Endothelial cell of umbilical vein (primary cell): ENCODE measurements at regions of chr4 and their contacts with region 1.

Region 1: DNA sequence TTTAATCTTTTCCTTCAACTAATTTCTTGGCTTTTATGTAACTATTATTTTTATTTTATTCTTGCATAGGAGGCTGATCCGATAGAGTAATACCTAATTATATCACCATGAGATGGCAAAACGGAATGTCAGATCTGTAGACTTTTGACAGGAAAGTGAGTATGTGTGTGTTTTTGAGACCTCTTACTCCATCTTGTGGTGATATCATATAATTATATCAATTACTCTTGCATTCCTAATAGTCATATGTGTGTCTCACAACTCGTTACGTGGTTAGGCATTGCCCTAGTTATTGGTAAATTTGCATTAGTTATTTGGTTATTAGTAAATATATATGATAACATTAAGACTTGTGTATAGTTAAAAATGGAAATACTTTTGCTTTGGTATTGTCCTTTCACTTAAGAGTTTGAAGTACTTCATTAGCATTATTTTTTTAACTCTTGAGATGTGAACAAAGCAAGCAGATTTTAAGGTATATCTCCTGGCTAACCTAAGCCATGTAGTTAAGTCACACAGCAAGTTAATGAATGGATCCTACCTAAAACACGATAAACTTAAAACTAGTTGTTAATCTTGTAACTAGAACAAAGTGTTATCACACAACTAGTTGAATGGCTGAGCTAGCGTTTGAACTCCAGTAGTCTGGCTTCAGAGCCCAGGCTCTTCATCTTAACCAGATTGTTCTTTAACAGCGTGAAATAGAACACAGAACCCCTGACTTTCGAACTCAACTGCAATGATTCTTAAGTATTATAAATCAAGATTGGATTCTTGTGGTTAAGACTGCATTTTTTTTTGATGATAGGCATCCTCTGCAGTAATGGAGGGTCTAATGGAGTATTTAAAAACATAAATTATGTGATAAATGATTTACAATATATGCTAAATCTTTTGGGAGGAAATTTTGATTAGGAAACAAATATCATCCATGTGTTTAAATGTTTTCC is 67.1 kb downstream of the PGRMC2 start:
- DNase-seq: peak; percentile 70
- H3K4me3 ChIP-seq: no peak overlapping the region
- H3K27ac ChIP-seq: peak overlapping the region; percentile 28
- H3K4me1 ChIP-seq: no peaks in the 10 kb centered on the region
- H3K27me3 ChIP-seq: no peaks in the 10 kb centered on the region
- CTCF ChIP-seq: peak; percentile 16 to 20
- POLR2A ChIP-seq: no peak

Region 2: GRCh38 chr4:127965062-127965802 is 255.3 kb before region 1 on chr4 and contains the starts of genes ABHD18 and MFSD8:
- CTCF ChIA-PET with region 1: interaction called, 4 read pairs
- POLR2A ChIA-PET with region 1: no interaction called
- dilution Hi-C with region 1: no loop called
- intact Hi-C with region 1: loop called (anchors 10 kb)
- DNase-seq: peak; percentile 99
- H3K4me3 ChIP-seq: peak within 1 kb of the TSS; percentile 70 to 85 (median 71)
- H3K27ac ChIP-seq: peak within 1 kb of the TSS; percentile 62
- H3K4me1 ChIP-seq: peaks cover 8% of the 10 kb centered on the region
- H3K27me3 ChIP-seq: no peaks in the 10 kb centered on the region
- CTCF ChIP-seq: peak; percentile 32 to 61
- POLR2A ChIP-seq: peak; percentile 76
- total RNA-seq, gene ABHD18: 9.1 and 10.1 TPM in 2 replicates
- total RNA-seq, gene MFSD8: 19.4 and 21.3 TPM in 2 replicates

Region 3: GRCh38 chr4:128068935-128069334 is 151.6 kb before region 1 on chr4:
- CTCF ChIA-PET with region 1: interaction called, 66 read pairs
- POLR2A ChIA-PET with region 1: no interaction called
- dilution Hi-C with region 1: no loop called
- intact Hi-C with region 1: loop called (anchors 2 kb)
- DNase-seq: peak; percentile 40
- H3K4me3 ChIP-seq: no peak overlapping the region
- H3K27ac ChIP-seq: no peak overlapping the region
- H3K4me1 ChIP-seq: no peaks in the 10 kb centered on the region
- H3K27me3 ChIP-seq: no peaks in the 10 kb centered on the region
- CTCF ChIP-seq: peak; percentile 45 to 59
- POLR2A ChIP-seq: no peak

Region 4: GRCh38 chr4:128155231-128155855 is 65.2 kb before region 1 on chr4:
- CTCF ChIA-PET with region 1: no interaction called
- POLR2A ChIA-PET with region 1: no interaction called
- dilution Hi-C with region 1: no loop called
- intact Hi-C with region 1: no loop called
- DNase-seq: peak; percentile 47
- H3K4me3 ChIP-seq: no peak overlapping the region
- H3K27ac ChIP-seq: peak overlapping the region; percentile 85
- H3K4me1 ChIP-seq: peaks cover 28% of the 10 kb centered on the region
- H3K27me3 ChIP-seq: no peaks in the 10 kb centered on the region
- CTCF ChIP-seq: no peak
- POLR2A ChIP-seq: peak; percentile 14

Region 5: DNA sequence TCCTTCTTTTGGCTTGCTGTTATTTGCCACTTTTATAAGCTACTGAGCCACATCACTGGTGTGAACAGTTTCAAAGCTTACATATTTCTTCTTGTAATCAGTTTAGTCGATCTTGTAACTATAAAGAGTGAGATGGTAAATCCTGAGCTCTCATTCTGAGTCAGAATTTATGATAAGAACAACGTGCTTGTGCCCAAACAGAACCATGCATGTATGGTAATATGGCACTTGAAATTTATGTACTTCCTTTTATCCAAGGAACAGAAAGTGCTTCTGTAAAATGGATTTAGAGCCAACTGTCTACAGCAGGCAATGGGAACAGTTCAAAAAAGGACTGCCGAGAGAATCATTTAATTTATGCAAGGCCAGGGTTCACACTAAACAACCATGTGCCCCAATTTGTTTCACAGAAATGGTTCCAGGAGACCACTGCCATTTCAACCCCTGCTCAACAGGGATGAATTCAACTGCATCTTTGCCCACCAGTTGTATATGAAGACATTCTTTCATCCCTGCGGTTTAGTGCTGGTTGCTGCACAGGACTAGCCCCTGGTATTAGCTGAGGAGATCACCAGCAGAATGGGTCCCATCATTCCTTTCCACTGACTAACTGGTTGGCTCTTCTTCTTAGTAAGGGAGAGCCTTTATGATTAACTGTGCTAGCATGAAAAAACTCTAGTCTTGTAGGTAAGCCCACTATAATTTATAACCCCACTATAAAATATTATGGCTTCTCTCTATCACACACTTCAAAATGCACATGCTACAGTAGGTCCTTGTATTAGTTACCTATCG is 230.0 kb after region 1 on chr4:
- CTCF ChIA-PET with region 1: no interaction called
- POLR2A ChIA-PET with region 1: no interaction called
- dilution Hi-C with region 1: no loop called
- intact Hi-C with region 1: no loop called
- DNase-seq: no peak
- H3K4me3 ChIP-seq: no peak overlapping the region
- H3K27ac ChIP-seq: no peak overlapping the region
- H3K4me1 ChIP-seq: peaks cover 15% of the 10 kb centered on the region
- H3K27me3 ChIP-seq: no peaks in the 10 kb centered on the region
- CTCF ChIP-seq: no peak
- POLR2A ChIP-seq: no peak